IMR-90 (cell line): ENCODE measurements at regions of chr17 and their contacts with region 1.

Region 1: DNA sequence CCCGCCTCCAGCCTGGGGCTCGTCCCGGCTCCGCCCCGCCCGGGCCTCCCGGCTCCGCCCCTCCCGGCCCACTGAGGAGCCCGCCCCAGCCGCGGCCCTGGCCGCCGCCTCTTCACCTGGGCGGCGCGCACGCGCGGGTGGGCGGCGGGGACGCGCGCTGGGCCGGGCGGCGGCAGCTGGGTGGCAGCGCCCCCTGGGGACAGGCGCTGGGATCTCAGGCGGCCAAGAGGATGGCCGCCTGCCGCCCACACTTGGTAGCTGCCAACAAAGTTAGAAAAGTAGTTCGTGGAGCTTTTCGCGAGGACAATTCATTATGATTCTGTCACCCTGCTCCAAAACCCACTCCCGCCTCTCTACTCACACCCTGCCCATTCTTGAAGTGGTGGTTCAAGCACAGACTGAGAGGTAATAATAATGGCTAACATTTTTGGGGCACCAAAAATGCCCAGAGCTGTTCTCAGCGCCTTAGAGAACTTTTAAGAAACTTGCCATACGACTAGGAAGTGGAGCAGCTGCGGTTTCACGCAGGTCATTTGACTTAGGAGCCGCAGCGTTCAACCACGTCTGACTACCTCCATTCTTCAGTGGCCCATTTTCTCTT is 340 bp upstream of the MYO1D start:
- DNase-seq: peak; percentile 73
- ATAC-seq: peak; percentile 100
- H3K4me3 ChIP-seq: peak overlapping the region; percentile 60
- H3K27ac ChIP-seq: no peak overlapping the region
- H3K4me1 ChIP-seq: peaks cover 2% of the 10 kb centered on the region
- H3K27me3 ChIP-seq: peaks cover 7% of the 10 kb centered on the region
- CTCF ChIP-seq: peak; percentile 95
- POLR2A ChIP-seq: no peak
- RAD21 ChIP-seq: peak; percentile 52

Region 2: GRCh38 chr17:32862940-32863339 is 14.3 kb before region 1 on chr17:
- CTCF ChIA-PET with region 1: interaction called, 13 read pairs
- POLR2A ChIA-PET with region 1: no interaction called
- dilution Hi-C with region 1: no loop called
- in situ Hi-C with region 1: no loop called
- intact Hi-C with region 1: no loop called
- DNase-seq: no peak
- ATAC-seq: no peak
- H3K4me3 ChIP-seq: no peak overlapping the region
- H3K27ac ChIP-seq: no peak overlapping the region
- H3K4me1 ChIP-seq: no peaks in the 10 kb centered on the region
- H3K27me3 ChIP-seq: no peaks in the 10 kb centered on the region; the same call in 1 of the 2 replicates
- CTCF ChIP-seq: no peak
- POLR2A ChIP-seq: no peak
- RAD21 ChIP-seq: no peak

Region 3: DNA sequence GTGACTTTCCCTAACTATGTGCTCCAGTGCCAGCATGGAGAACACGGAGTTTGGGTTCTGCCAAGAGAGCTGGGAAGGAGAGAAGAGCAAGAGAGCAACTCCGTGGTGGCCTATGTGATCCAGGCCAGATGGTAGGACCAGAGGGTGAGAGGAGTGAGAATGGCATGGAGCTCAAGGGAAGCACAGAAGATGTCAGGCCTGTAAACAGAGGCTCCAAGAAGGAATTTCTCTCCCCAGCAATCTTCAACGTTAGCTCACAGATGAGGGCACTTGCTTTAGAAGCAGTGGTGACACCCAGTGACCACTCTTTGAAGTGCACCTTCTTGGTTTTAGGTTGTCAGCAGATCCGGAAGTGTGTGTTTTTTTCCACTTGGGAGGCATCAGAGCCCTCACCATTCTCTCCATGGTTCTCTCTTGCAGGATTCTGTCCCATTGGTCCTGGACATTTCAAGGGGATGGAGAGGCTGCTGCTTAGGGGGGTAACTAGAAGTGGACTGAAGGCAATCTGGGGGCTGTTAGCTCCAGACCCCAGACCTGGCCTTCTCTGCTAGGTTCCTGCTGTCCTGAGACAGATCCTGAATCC is 32.6 kb after region 1 on chr17:
- CTCF ChIA-PET with region 1: interaction called, 6 read pairs
- POLR2A ChIA-PET with region 1: no interaction called
- dilution Hi-C with region 1: no loop called
- in situ Hi-C with region 1: no loop called
- intact Hi-C with region 1: loop called (anchors 2 kb)
- DNase-seq: peak; percentile 84
- ATAC-seq: peak; percentile 84
- H3K4me3 ChIP-seq: no peak overlapping the region
- H3K27ac ChIP-seq: no peak overlapping the region
- H3K4me1 ChIP-seq: peaks cover 2% of the 10 kb centered on the region; the same call in 1 of the 2 replicates
- H3K27me3 ChIP-seq: peaks cover 3% of the 10 kb centered on the region; the same call in 1 of the 2 replicates
- CTCF ChIP-seq: peak; percentile 74
- POLR2A ChIP-seq: no peak
- RAD21 ChIP-seq: peak; percentile 69

Region 4: GRCh38 chr17:32927724-32928585 is 50.7 kb after region 1 on chr17 and contains the start of gene TMEM98:
- CTCF ChIA-PET with region 1: interaction called, 3 read pairs
- POLR2A ChIA-PET with region 1: no interaction called
- dilution Hi-C with region 1: no loop called
- in situ Hi-C with region 1: no loop called
- intact Hi-C with region 1: loop called (anchors 5 kb)
- DNase-seq: peak; percentile 12
- ATAC-seq: peak; percentile 81
- H3K4me3 ChIP-seq: peak within 1 kb of the TSS; percentile 79
- H3K27ac ChIP-seq: peak within 1 kb of the TSS; percentile 94
- H3K4me1 ChIP-seq: peaks cover 16% of the 10 kb centered on the region
- H3K27me3 ChIP-seq: no peaks in the 10 kb centered on the region
- CTCF ChIP-seq: no peak
- POLR2A ChIP-seq: no peak
- RAD21 ChIP-seq: no peak
- total RNA-seq, gene TMEM98: 129 and 173 TPM in 2 replicates

Region 5: GRCh38 chr17:33113276-33113990 is 236.2 kb after region 1 on chr17:
- CTCF ChIA-PET with region 1: no interaction called
- POLR2A ChIA-PET with region 1: no interaction called
- dilution Hi-C with region 1: no loop called
- in situ Hi-C with region 1: no loop called
- intact Hi-C with region 1: no loop called
- DNase-seq: peak; percentile 2
- ATAC-seq: 0 out of 2 replicates have a peak, but pooled peaks have one; percentile 17
- H3K4me3 ChIP-seq: no peak overlapping the region
- H3K27ac ChIP-seq: no peak overlapping the region
- H3K4me1 ChIP-seq: no peaks in the 10 kb centered on the region
- H3K27me3 ChIP-seq: peaks cover 2% of the 10 kb centered on the region; the same call in 1 of the 2 replicates
- CTCF ChIP-seq: no peak
- POLR2A ChIP-seq: no peak
- RAD21 ChIP-seq: no peak